CD8-positive, alpha-beta T cell (primary cell): ENCODE measurements at regions of chr18 and their contacts with region 1.

Region 1: DNA sequence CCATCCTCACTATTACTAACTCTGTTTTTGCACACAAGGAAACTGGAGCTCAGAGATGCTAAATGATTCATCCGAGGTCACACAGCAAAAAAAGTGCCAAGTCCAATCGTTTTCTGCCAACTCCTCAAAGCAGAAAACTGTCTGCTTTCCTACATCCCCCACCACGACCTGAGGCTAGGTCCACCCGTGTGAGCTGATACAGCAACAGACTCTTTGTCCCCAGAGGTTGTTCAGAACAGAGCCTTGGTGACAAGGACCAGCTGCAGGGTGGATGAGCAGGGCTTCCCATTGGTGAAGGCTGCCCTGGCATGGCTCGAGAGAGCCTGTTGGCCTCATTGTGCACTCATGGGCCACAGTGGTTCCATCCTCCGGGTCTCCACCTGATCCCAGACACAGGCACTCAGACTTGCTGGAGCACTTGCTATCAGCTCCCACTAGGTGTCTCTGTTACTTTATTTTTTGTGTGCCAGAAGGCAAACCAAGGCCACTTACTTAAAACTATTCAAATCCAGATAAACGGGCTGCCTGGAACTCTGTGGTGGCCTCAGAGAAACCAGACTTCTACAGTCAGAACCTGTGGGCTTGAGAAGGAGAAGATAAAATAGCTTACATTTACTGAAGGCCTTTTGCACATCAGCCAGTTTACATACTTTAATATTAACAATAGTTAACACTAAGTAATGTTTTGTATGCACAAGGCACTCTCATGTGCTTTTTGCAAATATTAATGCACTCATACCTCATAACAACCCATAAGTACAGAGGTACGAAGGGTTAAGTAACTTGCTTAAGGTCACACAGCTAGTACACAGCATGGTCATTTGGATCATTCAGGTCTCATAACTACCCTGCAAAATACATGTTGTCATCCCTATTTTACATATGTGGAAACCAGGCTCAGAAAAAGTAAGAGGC is 62.9 kb upstream of the CTIF start:
- DNase-seq: peak in 2 of 9 experiments; percentile 37 to 40
- ATAC-seq: no peak
- H3K4me3 ChIP-seq: no peak overlapping the region
- H3K4me3 Mint-ChIP-seq: no peak overlapping the region
- H3K27ac ChIP-seq: no peak overlapping the region
- H3K27ac Mint-ChIP-seq: no peak overlapping the region
- H3K4me1 ChIP-seq: no peaks in the 10 kb centered on the region
- H3K4me1 Mint-ChIP-seq: no peaks in the 10 kb centered on the region
- H3K27me3 ChIP-seq: no peaks in the 10 kb centered on the region
- H3K27me3 Mint-ChIP-seq: peaks cover 28% of the 10 kb centered on the region
- CTCF ChIP-seq: peak; percentile 44

Region 2: DNA sequence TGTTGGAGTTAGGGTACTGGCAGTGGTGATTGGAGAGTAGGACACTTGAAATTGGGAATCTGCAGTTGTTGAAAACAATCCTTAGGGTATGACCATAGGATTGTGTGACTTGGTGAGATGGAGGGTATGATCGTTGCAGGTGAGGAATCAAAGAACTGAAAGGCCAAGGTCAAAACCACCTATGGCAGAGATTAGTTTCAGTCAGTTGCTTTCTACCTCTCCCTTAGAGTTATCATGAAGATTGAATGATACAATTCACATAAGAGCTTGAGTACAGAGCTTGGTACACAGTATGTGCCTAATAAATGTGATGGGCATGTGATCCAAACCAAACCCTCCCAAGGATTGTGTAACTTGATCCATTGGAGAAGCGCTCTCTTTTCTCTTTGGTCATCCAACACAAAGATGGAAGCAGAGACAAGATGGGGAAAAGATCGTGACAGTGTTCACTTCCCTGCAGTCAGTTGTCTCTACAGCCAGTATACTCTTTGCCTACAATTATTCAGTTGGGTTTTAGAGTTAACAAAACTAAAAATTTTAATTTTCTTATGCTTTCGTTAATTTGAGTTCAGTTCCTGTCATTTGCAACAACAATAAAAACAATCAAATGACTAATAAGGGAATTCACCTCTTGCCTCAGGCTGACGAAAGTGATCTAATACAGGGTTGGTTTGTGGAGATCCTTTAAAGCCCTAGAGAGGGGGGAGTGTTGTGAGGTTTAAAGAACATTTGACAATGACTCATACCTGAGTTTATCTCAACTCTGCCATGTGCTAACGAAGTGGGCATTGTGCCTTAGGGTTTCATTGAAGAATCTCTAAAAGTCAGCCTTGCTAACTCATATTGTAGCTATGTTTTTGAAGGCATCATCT is 530.7 kb before region 1 on chr18:
- CTCF ChIA-PET with region 1: no interaction called
- POLR2A ChIA-PET with region 1: no interaction called
- intact Hi-C with region 1: no loop called
- DNase-seq: peak in 2 of 9 experiments; percentile 17 to 23
- ATAC-seq: peak; percentile 58
- H3K4me3 ChIP-seq: no peak overlapping the region
- H3K4me3 Mint-ChIP-seq: no peak overlapping the region
- H3K27ac ChIP-seq: no peak overlapping the region
- H3K27ac Mint-ChIP-seq: no peak overlapping the region
- H3K4me1 ChIP-seq: no peaks in the 10 kb centered on the region
- H3K4me1 Mint-ChIP-seq: no peaks in the 10 kb centered on the region
- H3K27me3 ChIP-seq: peaks cover 0 to 2% of the 10 kb centered on the region in 2 experiments
- H3K27me3 Mint-ChIP-seq: peaks cover 3% of the 10 kb centered on the region
- CTCF ChIP-seq: no peak

Region 3: DNA sequence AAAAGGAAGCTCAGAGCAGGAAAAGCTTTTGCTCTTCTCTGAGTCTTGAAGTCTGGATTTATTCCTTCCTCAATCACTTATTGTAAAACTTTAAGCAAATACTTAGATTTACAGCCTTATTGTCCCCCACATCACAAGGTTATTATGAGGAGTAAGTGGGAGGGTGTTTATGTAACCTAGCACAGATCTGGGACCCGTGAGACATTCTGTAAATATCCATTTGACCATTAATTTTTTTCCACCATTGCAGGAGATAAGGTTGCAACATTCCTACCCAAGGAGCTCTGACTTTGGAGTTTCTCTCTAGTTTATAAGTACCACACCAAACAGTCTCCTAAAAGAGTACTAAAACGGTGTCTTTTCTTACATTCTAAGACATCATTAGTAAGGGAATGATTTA is 10.9 kb after region 1 on chr18:
- CTCF ChIA-PET with region 1: interaction called, 11 read pairs
- POLR2A ChIA-PET with region 1: no interaction called
- intact Hi-C with region 1: no loop called
- DNase-seq: no peak
- ATAC-seq: no peak
- H3K4me3 ChIP-seq: no peak overlapping the region
- H3K4me3 Mint-ChIP-seq: no peak overlapping the region
- H3K27ac ChIP-seq: no peak overlapping the region
- H3K27ac Mint-ChIP-seq: no peak overlapping the region
- H3K4me1 ChIP-seq: no peaks in the 10 kb centered on the region
- H3K4me1 Mint-ChIP-seq: no peaks in the 10 kb centered on the region
- H3K27me3 ChIP-seq: peaks cover 0 to 3% of the 10 kb centered on the region in 2 experiments
- H3K27me3 Mint-ChIP-seq: peaks cover 35% of the 10 kb centered on the region
- CTCF ChIP-seq: no peak

Region 4: GRCh38 chr18:48663931-48664847 is 188.3 kb after region 1 on chr18:
- CTCF ChIA-PET with region 1: interaction called, 14 read pairs
- POLR2A ChIA-PET with region 1: no interaction called
- intact Hi-C with region 1: loop called (anchors 5 kb)
- DNase-seq: peak; percentile 22 to 66 (median 47)
- ATAC-seq: peak; percentile 20
- H3K4me3 ChIP-seq: no peak overlapping the region
- H3K4me3 Mint-ChIP-seq: no peak overlapping the region
- H3K27ac ChIP-seq: no peak overlapping the region
- H3K27ac Mint-ChIP-seq: no peak overlapping the region
- H3K4me1 ChIP-seq: no peaks in the 10 kb centered on the region
- H3K4me1 Mint-ChIP-seq: no peaks in the 10 kb centered on the region
- H3K27me3 ChIP-seq: no peaks in the 10 kb centered on the region
- H3K27me3 Mint-ChIP-seq: peaks cover 10% of the 10 kb centered on the region
- CTCF ChIP-seq: peak; percentile 56